Posterior vena cava (tissue), 2 donors: ENCODE measurements at regions of chr9 and their contacts with region 1.

Region 1: DNA sequence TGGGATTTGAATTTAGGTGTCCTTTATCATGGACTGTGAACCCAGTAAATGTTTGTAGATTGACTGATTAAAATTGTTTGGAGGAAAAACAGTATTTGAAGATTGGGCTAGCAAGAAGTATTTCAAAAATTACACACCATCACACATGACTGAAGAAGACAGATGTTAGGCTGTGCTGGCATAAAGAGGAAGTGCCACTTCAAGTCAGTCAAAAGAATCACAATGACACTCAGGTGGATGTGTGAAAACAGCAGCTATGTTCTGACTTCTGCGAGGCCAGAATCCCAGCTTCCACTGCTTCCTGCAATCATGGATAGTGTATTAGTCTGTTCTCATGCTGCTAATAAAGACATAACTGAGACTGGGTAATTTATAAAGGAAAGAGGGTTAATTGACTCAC is 393.3 kb downstream of the DMRT2 start:
- DNase-seq: no peak

Region 2: DNA sequence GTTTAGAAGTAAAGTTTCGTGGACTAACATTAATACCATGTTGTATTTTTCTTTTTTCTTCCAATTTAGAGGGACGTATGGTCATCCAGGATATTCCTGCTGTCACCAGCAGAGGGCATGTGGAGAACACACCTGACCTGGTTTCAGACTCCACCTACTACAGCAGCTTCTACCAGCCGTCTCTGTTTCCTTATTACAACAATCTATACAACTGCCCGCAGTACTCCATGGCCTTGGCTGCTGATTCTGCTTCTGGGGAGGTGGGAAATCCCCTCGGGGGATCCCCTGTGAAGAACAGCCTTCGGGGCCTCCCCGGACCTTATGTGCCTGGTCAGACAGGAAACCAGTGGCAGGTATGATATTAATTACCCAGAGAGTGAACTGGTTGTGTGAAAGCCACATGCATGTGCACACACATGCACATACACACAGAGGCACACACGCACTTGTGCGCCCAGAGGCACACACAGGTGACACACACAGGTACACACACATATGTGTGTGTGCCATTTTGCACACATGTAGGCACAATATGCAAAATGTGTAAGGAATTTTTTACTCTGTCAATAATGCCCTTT is 549.5 kb before region 1 on chr9:
- intact Hi-C with region 1: no loop called
- DNase-seq: no peak

Region 3: DNA sequence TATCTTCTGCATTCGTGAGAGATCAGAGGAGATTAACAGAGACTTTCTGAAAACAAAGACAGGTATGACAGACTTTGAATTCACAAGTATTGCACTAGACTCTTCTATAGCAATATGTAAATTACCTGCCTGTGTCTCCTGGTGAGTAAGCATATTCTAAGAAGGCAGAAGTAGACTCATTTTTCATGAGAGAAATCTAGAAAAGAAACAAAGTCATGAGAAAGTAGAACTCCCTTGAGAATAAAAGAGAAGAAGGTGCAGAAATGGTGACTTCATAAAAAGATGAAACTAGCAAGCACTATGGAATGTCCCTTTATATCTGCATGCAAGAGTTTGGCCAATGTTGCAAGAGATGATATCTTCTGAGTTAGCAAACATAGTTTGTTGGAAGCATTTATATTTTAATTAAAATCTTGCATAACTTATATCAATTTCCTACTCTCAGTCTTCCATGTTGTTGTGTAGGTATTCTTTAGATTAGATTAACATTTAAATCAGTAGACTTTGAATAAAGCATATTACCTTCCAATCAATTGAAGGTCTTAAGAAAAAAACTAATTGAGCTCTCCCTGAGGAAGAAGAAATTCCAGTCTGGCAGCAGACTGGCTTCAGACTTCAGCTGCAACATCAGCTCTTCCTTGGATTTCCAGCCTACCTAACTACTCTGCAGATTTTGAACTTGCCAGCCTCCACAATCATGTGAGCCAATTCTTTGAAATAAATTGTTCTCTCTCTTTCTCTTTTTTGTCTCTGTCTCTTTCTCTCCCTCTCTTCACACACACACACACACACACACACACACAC is 26.8 kb after region 1 on chr9:
- intact Hi-C with region 1: no loop called
- DNase-seq: no peak

Region 4: DNA sequence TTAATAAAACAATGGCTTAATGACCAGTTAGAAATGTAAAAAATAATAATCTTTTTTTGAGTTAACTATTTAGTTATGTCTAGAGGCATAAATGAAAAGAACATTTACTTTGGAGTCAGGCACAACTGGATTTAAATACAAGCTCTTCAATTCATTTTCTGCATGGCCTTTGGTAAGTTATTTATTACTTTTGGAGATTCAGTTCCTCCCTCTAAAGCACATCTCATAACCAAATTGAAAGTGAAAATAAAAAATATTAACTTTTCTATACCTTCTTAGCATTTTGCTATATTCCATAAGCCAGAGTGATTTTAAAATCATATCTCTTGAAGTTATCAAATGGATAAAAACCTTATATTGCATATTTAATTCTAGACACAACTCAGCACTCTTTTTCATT is 136.8 kb after region 1 on chr9:
- intact Hi-C with region 1: no loop called
- DNase-seq: no peak

Region 5: GRCh38 chr9:2868883-2869282 is 1425.4 kb after region 1 on chr9:
- intact Hi-C with region 1: loop called in 1 of 2 experiments (anchors 5 kb)
- DNase-seq: no peak